ENCODE measurements at regions of chr10 and their contacts with region 1.

Region 1: GRCh38 chr10:71638064-71638821 is 81.3 kb downstream of the C10orf105 start:
- DNase-seq: peak; percentile 67 to 94 (median 82)
- ATAC-seq: peak; percentile 75
- H3K4me3 ChIP-seq: no peak overlapping the region; the same call in 1 of the 2 replicates
- H3K27ac ChIP-seq: peak overlapping the region; percentile 80
- H3K4me1 ChIP-seq: peaks cover 69 to 91% of the 10 kb centered on the region in 2 experiments
- H3K27me3 ChIP-seq: no peaks in the 10 kb centered on the region; a peak in 1 of 5 replicates
- CTCF ChIP-seq: no peak
- EP300 ChIP-seq: peak; percentile 62
- POLR2A ChIP-seq: peak; percentile 76
- RAD21 ChIP-seq: no peak

Region 2: DNA sequence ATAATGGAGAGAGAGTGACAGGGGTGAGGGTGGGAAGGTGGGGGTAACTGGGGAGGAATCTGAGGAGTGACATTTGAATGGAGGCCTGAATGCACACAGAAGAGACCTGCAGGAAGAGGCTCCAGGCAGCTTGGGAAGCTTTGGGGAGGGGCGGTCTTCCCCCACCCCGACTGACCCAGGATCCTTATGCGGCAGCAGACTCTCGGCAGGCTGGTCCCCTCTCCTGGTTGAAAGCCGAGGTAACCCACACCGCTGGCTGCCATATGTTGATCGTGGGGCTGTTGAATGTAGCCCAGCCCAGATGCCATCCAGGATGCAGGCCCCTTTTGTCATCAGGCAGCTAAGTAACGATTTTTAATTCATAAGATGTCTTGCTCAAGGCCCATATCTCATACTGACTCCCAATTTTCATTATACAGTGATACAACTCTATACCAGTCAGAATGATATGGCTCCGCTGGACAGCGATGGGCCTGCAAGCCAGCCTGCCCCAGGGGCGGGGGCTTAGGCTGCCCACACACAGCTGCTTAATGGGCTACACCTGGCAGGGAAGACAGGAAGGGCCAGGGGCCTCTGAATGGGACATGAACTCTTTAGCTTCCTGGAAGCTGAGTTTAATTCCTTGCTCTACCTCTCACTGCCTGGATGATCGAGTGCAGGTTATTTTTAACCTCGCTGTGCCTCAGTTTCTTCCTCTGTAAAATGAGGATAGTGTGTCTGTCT is 31.4 kb before region 1 on chr10:
- CTCF ChIA-PET with region 1: no interaction called
- POLR2A ChIA-PET with region 1: no interaction called
- in situ Hi-C with region 1: no loop called
- intact Hi-C with region 1: no loop called
- DNase-seq: no peak
- ATAC-seq: no peak
- H3K4me3 ChIP-seq: no peak overlapping the region
- H3K27ac ChIP-seq: no peak overlapping the region
- H3K4me1 ChIP-seq: peaks cover 4 to 21% of the 10 kb centered on the region in 2 experiments; a peak in 4 of 5 replicates
- H3K27me3 ChIP-seq: no peaks in the 10 kb centered on the region
- CTCF ChIP-seq: no peak
- EP300 ChIP-seq: no peak
- POLR2A ChIP-seq: no peak
- RAD21 ChIP-seq: no peak

Region 3: DNA sequence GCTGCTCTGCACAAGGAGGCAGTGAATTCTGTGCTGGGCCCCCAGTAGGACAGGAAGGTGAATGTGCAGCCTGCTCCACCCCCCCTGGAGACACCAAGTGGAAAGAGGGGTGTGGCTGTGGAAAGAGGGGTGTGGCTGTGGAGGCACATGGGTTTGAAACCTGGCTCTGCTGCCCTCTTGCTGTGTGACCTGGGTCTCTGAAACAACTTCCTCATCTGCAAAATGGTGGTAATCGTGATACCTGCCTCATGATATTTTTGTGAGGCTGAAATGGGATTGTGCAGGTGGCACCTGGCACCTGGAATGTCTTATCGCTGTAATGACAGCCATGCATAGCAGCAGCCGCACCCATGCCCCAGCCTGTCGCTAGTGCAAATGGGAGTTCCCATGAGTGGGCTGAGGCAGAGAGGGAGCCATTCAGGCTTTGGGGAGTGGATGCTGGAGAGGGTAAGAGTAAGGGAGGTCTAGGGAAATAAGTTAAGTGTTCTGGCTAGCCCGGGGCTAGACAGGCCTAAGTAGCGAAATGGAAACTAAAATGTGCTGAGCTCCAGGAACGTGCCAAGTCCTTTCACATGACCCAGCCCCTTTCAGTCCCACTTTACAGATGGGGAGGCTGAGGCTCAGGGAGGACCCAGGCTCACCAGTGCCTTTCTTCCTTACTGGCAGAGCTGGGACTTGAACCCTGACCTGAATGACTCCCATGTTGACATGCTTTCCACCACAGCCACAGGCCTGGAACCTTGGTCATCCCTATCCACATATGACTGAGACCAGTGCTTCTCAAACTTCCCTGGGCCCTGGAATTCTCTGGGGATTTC is 46.3 kb after region 1 on chr10:
- CTCF ChIA-PET with region 1: no interaction called
- POLR2A ChIA-PET with region 1: no interaction called
- in situ Hi-C with region 1: no loop called
- intact Hi-C with region 1: loop called (anchors 5 kb)
- DNase-seq: peak; percentile 87 to 94 (median 92)
- ATAC-seq: peak; percentile 97
- H3K4me3 ChIP-seq: no peak overlapping the region
- H3K27ac ChIP-seq: 0 out of 3 replicates have a peak overlapping the region, but pooled peaks have one; percentile 8
- H3K4me1 ChIP-seq: peaks cover 9 to 19% of the 10 kb centered on the region in 2 experiments
- H3K27me3 ChIP-seq: no peaks in the 10 kb centered on the region
- CTCF ChIP-seq: peak; percentile 73 to 76 (median 76)
- EP300 ChIP-seq: no peak
- POLR2A ChIP-seq: no peak
- RAD21 ChIP-seq: peak; percentile 49 to 79